Activated CD8-positive, alpha-beta T cell treated with anti-CD3 and anti-CD28 coated beads for 36 hours (primary cell): ENCODE measurements at regions of chr12 and their contacts with region 1.

Region 1: GRCh38 chr12:57005980-57006808 is at the start of gene ZBTB39:
- DNase-seq: peak; percentile 65
- ATAC-seq: peak; percentile 83
- H3K4me3 Mint-ChIP-seq: peak within 1 kb of the TSS; percentile 83
- H3K27ac Mint-ChIP-seq: peak within 1 kb of the TSS; percentile 80
- H3K4me1 Mint-ChIP-seq: peaks cover 45% of the 10 kb centered on the region
- H3K27me3 Mint-ChIP-seq: no peaks in the 10 kb centered on the region
- CTCF ChIP-seq: peak; percentile 34
- total RNA-seq, gene ZBTB39: 5.1 to 5.5 TPM

Region 2: DNA sequence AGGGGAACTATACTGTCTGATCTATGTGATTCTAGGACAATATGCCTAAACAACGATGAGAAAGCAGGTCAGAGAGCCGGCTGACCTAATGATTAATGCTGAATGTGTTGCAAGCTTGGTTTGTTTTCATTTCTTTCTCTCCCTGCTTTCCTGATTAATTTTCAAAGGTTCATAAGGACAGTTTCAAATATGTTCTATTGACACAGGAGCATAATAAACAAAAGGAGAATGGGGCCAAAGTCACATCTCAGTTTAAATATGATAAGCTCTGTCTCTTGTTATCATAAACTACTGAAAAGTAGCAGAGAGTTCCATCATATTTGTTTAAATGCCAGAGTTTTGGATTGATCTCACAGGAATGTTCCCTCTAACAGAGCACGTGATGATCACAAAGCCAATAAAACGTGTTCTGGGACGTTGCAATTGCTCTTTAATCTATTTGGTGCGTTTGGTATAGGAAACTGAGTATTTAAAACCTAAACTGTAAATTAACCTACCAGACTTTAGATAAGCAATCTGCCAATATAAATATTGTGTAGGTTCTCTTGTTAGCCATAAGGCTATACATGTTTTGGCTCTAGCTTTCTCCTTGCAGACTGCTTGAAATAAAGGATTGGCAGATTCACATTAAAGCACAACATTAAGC is 246.8 kb before region 1 on chr12:
- CTCF ChIA-PET with region 1: interaction called, 34 read pairs
- POLR2A ChIA-PET with region 1: no interaction called
- intact Hi-C with region 1: no loop called
- DNase-seq: no peak
- ATAC-seq: no peak
- H3K4me3 Mint-ChIP-seq: no peak overlapping the region
- H3K27ac Mint-ChIP-seq: no peak overlapping the region
- H3K4me1 Mint-ChIP-seq: peaks cover 9% of the 10 kb centered on the region
- H3K27me3 Mint-ChIP-seq: no peaks in the 10 kb centered on the region
- CTCF ChIP-seq: no peak

Region 3: DNA sequence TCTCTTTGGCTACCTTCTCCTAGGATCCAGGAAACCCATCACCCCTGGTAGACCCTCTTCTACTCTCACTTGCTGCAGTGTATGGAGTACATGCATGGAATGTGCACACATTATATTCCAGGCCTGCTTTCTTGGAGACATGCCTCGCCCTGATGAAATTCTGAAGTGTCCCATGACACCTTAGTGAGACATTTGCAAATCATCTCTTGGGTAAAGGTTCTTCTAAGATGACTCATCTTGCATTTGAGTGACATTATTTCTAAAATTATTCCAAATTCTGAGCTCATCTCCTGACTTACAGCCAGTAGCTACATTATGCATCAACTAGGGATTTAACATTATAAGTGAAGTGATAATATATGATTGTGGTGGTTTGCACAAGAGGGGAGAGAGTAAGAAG is 121.8 kb before region 1 on chr12:
- CTCF ChIA-PET with region 1: no interaction called
- POLR2A ChIA-PET with region 1: no interaction called
- intact Hi-C with region 1: no loop called
- DNase-seq: no peak
- ATAC-seq: no peak
- H3K4me3 Mint-ChIP-seq: no peak overlapping the region
- H3K27ac Mint-ChIP-seq: no peak overlapping the region
- H3K4me1 Mint-ChIP-seq: no peaks in the 10 kb centered on the region
- H3K27me3 Mint-ChIP-seq: peaks cover 14% of the 10 kb centered on the region
- CTCF ChIP-seq: no peak

Region 4: GRCh38 chr12:56900583-56900982 is 105.6 kb before region 1 on chr12:
- CTCF ChIA-PET with region 1: no interaction called
- POLR2A ChIA-PET with region 1: no interaction called
- intact Hi-C with region 1: no loop called
- DNase-seq: peak; percentile 3
- ATAC-seq: no peak
- H3K4me3 Mint-ChIP-seq: no peak overlapping the region
- H3K27ac Mint-ChIP-seq: no peak overlapping the region
- H3K4me1 Mint-ChIP-seq: no peaks in the 10 kb centered on the region
- H3K27me3 Mint-ChIP-seq: no peaks in the 10 kb centered on the region
- CTCF ChIP-seq: no peak

Region 5: GRCh38 chr12:56941299-56942017 is 64.7 kb before region 1 on chr12:
- CTCF ChIA-PET with region 1: no interaction called
- POLR2A ChIA-PET with region 1: no interaction called
- intact Hi-C with region 1: no loop called
- DNase-seq: no peak
- ATAC-seq: peak; percentile 64
- H3K4me3 Mint-ChIP-seq: no peak overlapping the region
- H3K27ac Mint-ChIP-seq: no peak overlapping the region
- H3K4me1 Mint-ChIP-seq: no peaks in the 10 kb centered on the region
- H3K27me3 Mint-ChIP-seq: peaks cover 8% of the 10 kb centered on the region
- CTCF ChIP-seq: no peak

Region 6: DNA sequence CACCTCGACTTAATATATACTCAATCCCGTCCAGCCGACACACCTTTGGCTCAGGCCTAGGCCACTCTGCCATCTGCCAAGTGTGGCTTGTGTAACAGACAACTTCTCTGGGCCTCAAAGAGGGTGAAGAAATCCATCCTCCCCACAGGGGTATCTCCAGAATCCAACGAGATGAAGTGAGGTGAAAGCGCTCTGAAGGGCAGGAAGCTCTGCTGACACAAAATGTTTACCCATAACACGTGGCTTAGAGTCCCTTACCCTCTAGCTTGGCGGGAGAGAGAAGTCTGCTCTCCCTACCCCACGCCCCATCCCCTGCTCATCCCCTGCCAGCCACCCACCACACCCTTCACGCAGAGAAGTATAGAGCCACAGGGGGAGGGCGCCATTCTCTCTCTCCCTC is 12.8 kb before region 1 on chr12:
- CTCF ChIA-PET with region 1: interaction called, 78 read pairs
- POLR2A ChIA-PET with region 1: interaction called, 5 read pairs
- intact Hi-C with region 1: no loop called
- DNase-seq: no peak
- ATAC-seq: no peak
- H3K4me3 Mint-ChIP-seq: no peak overlapping the region
- H3K27ac Mint-ChIP-seq: no peak overlapping the region
- H3K4me1 Mint-ChIP-seq: peaks cover 14% of the 10 kb centered on the region
- H3K27me3 Mint-ChIP-seq: no peaks in the 10 kb centered on the region
- CTCF ChIP-seq: no peak

Region 7: DNA sequence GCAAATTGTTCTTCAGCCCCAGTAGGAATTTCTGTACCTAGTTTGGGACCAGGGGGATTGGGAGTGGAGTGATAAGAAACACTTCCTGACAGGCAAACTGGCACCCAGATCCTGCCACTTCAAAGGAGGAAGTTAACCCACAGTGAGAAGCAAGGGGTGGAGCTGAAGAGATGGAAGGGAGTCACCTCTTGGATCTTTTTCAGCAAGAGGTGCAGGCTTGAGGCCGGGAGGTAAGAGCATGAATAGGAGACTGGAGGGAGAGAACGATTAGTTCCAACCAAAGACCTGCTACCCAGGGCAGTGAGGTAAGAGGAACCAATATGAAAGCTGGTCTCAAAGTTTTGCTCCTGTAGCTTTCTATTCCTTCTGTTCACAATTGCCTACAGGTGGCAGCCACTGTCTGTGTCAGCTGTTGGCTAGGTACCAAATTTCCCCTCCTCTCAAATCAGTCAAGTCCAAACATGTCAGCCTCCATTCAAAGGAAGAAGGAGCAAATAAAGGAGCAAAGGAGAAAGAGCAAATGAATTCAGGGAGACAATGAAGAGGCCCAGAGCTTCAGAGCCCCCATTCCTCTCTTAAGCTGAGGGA is 25.0 kb after region 1 on chr12:
- CTCF ChIA-PET with region 1: interaction called, 22 read pairs
- POLR2A ChIA-PET with region 1: interaction called, 11 read pairs
- intact Hi-C with region 1: no loop called
- DNase-seq: peak; percentile 39
- ATAC-seq: peak; percentile 42
- H3K4me3 Mint-ChIP-seq: no peak overlapping the region
- H3K27ac Mint-ChIP-seq: peak overlapping the region; percentile 26
- H3K4me1 Mint-ChIP-seq: peaks cover 39% of the 10 kb centered on the region
- H3K27me3 Mint-ChIP-seq: no peaks in the 10 kb centered on the region
- CTCF ChIP-seq: no peak

Region 8: DNA sequence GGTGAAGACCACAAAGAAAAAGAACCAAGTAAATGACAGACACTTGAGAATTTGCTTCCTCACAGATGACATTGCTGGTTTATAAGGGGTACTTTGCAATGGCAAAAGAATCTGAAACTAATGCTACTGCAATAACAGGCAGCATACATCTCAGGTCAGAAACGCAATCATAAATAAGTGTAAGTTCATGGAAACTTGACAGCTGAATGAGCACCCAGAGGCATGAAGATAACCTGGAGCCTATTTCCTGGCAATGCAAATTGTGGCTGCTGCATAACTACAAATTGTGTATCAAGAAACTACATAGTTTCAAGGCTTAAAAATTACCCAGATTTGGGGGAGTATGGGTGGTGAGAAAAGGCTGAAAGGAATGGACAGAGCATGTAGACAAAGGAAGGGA is 52.3 kb after region 1 on chr12:
- CTCF ChIA-PET with region 1: interaction called, 21 read pairs
- POLR2A ChIA-PET with region 1: interaction called, 7 read pairs
- intact Hi-C with region 1: loop called (anchors 1 kb)
- DNase-seq: no peak
- ATAC-seq: no peak
- H3K4me3 Mint-ChIP-seq: no peak overlapping the region
- H3K27ac Mint-ChIP-seq: peak overlapping the region; percentile 60
- H3K4me1 Mint-ChIP-seq: peaks cover 42% of the 10 kb centered on the region
- H3K27me3 Mint-ChIP-seq: no peaks in the 10 kb centered on the region
- CTCF ChIP-seq: no peak

Region 9: DNA sequence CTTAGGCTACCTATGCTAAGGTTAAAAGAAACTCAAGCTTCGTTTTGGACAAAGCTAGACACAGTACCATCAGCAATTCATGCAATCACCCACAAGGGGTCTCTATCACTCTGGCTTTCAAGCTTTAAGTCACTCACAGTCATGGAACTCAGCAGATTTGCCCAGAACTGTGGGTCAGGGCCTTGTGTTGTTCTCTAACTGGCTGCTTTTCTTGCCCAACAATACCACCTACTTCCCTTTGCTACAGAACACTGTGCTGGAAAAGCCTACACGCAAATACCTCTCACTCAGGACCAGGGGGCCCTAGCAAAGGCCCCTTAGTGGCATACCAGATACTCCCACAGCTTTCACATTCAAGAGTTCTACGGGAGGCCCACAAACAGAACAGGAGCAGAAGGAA is 63.3 kb after region 1 on chr12:
- CTCF ChIA-PET with region 1: interaction called, 14 read pairs
- POLR2A ChIA-PET with region 1: interaction called, 4 read pairs
- intact Hi-C with region 1: no loop called
- DNase-seq: peak; percentile 79
- ATAC-seq: peak; percentile 90
- H3K4me3 Mint-ChIP-seq: peak overlapping the region; percentile 62
- H3K27ac Mint-ChIP-seq: peak overlapping the region; percentile 90
- H3K4me1 Mint-ChIP-seq: peaks cover 71% of the 10 kb centered on the region
- H3K27me3 Mint-ChIP-seq: no peaks in the 10 kb centered on the region
- CTCF ChIP-seq: peak; percentile 86